ENCODE measurements at regions of chr7 and their contacts with region 1.

Region 1: GRCh38 chr7:31763548-31763947 is 76.5 kb downstream of the PPP1R17 start:
- DNase-seq: no peak
- H3K4me3 ChIP-seq: no peak overlapping the region
- H3K27ac ChIP-seq: no peak overlapping the region
- H3K4me1 ChIP-seq: no peaks in the 10 kb centered on the region
- H3K27me3 ChIP-seq: no peaks in the 10 kb centered on the region
- CTCF ChIP-seq: no peak
- EP300 ChIP-seq: no peak
- POLR2A ChIP-seq: no peak

Region 2: GRCh38 chr7:32347244-32347828 is 583.8 kb after region 1 on chr7:
- in situ Hi-C with region 1: loop called in 1 of 4 experiments (anchors 25 kb)
- intact Hi-C with region 1: no loop called
- DNase-seq: no peak
- H3K4me3 ChIP-seq: no peak overlapping the region
- H3K27ac ChIP-seq: no peak overlapping the region
- H3K4me1 ChIP-seq: no peaks in the 10 kb centered on the region
- H3K27me3 ChIP-seq: no peaks in the 10 kb centered on the region
- CTCF ChIP-seq: peak; percentile 46 to 76 (median 60)
- EP300 ChIP-seq: no peak
- POLR2A ChIP-seq: no peak

Measured in transverse colon (tissue), 4 donors.